Colonic mucosa (tissue), 4 donors: ENCODE measurements at regions of chr19 and their contacts with region 1.

Region 1: DNA sequence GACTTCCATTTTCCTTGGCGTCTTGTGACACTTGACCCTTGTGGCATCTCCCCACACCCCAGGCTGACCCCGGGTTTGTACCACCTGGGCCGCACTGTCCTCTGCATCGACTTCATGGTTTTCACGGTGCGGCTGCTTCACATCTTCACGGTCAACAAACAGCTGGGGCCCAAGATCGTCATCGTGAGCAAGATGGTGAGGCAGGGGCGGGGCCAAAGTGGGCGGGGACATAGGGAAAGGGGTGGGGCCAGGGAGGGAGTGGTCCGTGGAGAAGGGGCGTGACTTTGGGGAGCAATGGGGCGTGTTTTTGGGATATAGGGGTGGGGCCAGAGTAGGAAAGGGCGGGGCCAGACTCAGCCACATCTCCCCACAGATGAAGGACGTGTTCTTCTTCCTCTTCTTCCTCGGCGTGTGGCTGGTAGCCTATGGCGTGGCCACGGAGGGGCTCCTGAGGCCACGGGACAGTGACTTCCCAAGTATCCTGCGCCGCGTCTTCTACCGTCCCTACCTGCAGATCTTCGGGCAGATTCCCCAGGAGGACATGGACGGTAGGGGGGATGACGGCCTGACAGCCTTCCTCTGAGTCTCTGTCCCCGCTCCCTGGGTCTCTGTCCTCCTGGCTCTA is 42.8 kb downstream of the TRPM4 start:
- DNase-seq: peak; percentile 63
- H3K4me3 ChIP-seq: no peak overlapping the region
- H3K27ac ChIP-seq: peak overlapping the region; percentile 19
- H3K4me1 ChIP-seq: peaks cover 15% of the 10 kb centered on the region
- H3K27me3 ChIP-seq: no peaks in the 10 kb centered on the region
- CTCF ChIP-seq: no peak

Region 2: DNA sequence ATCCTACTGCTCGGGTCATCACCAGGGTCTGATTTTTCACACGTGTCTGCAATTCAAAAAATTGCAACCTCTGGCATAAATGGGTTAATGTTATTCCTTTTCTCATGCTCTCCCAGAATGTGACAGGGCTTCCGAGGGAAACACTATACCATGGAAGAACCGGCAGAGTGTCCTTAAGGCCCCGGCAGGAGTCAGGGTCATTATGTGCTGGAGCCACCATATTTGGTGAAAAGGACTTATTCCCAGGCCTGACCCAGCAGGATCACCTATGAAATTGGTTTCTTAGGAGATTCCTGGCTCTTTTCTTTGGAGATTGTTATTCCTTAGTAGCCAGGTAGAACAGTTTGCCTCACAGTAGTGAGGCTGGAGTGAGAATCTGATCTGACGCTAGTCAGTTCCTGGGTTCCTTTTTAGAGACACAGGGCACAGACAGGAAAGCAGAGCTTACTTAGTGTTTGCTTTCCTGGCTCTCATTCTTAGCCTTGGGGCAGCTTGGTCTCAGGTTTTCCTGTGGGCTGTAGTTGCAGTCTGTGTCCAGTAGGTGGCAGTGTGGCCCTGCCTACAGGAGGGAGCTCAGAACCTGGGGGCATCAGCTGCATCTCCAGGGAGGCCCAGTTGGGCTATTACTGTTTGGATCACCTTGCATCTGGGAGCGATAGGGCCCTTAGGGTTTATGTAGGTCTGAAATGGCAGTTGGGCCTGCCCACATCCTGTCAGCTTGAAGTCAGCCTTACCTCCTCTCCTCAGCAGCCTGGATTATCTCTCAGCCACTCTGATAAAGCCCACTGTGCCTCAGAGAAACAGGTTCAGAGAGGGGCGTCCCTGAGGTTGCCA is 102.7 kb before region 1 on chr19:
- intact Hi-C with region 1: loop called (anchors 5 kb)
- DNase-seq: peak; percentile 76
- H3K4me3 ChIP-seq: no peak overlapping the region
- H3K27ac ChIP-seq: no peak overlapping the region
- H3K4me1 ChIP-seq: no peaks in the 10 kb centered on the region
- H3K27me3 ChIP-seq: no peaks in the 10 kb centered on the region
- CTCF ChIP-seq: peak; percentile 99

Region 3: DNA sequence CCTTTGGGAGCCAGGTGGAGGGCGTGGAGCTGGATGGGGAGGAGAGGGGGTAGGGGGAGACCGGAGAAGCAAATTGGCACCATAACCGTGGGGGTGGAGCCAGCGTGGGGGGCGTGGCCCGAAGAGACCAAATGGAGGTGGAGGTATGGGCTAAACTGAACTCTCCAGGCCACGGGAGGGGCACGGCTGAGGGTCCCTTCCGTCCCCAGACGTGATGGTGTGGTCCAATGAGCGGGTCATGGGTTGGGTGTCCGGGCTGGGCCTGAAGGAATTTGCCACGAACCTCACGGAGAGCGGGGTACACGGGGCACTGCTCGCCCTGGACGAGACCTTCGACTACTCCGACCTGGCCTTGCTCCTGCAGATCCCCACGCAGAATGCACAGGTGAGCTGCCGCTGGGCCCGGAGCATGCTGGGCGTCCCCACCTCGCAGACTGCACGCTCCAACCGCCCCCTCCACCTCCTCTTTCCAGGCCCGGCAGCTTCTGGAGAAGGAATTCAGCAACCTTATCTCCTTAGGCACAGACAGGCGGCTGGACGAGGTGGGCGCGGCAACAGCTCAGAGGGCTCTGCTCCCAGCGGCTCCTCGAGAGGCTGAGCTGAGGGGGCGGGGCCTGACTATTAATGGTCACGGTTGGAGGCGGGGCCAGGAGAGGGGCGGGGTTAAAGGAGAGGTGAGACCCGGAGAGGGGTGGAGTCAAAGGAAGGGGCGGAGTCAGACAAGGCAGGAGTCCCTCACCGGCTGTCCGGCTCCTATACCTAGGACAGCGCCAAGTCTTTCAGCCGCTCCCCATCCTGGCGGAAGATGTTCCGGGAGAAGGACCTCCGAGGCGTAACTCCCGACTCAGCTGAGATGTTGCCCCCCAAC is 51.3 kb before region 1 on chr19:
- intact Hi-C with region 1: loop called (anchors 5 kb)
- DNase-seq: peak; percentile 100
- H3K4me3 ChIP-seq: peak overlapping the region; percentile 58
- H3K27ac ChIP-seq: peak overlapping the region; percentile 92
- H3K4me1 ChIP-seq: no peaks in the 10 kb centered on the region
- H3K27me3 ChIP-seq: no peaks in the 10 kb centered on the region
- CTCF ChIP-seq: no peak

Region 4: GRCh38 chr19:49157445-49158224 is 42.7 kb before region 1 on chr19 and contains the start of gene TRPM4:
- intact Hi-C with region 1: loop called (anchors 5 kb)
- DNase-seq: peak; percentile 98
- H3K4me3 ChIP-seq: peak within 1 kb of the TSS; percentile 83
- H3K27ac ChIP-seq: peak within 1 kb of the TSS; percentile 95
- H3K4me1 ChIP-seq: peaks cover 4% of the 10 kb centered on the region
- H3K27me3 ChIP-seq: no peaks in the 10 kb centered on the region
- CTCF ChIP-seq: no peak
- total RNA-seq, gene TRPM4: 175 to 307 TPM

Region 5: DNA sequence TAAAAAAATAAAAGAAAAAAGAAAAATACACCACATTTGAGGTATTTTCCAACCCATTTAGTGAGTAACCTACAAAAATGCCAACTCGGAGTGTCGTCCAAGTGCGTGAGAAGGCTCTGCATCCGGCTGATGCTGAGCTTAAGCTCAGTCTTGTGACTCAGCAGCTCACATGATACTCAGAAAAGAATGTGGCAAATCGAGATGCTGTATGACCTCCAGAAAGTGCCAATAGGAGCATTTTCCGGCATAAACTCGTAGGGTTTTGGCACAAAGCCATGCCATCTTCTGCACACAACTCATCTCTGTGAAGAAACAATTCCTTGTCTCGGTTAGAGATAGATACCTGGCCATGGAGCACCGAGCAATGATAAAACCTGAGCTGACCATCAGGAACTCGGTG is 15.7 kb after region 1 on chr19:
- intact Hi-C with region 1: no loop called
- DNase-seq: no peak
- H3K4me3 ChIP-seq: no peak overlapping the region
- H3K27ac ChIP-seq: no peak overlapping the region
- H3K4me1 ChIP-seq: no peaks in the 10 kb centered on the region
- H3K27me3 ChIP-seq: no peaks in the 10 kb centered on the region
- CTCF ChIP-seq: no peak